ENCODE measurements at regions of chr3 and their contacts with region 1.

Region 1: GRCh38 chr3:58299839-58300516 is 6.1 kb upstream of the RPP14 start:
- DNase-seq: peak in 2 of 4 donors; percentile 14 to 20
- ATAC-seq: peak; percentile 47
- H3K4me3 ChIP-seq: no peak overlapping the region
- H3K27ac ChIP-seq: no peak overlapping the region
- H3K4me1 ChIP-seq: no peaks in the 10 kb centered on the region
- H3K27me3 ChIP-seq: no peaks in the 10 kb centered on the region
- CTCF ChIP-seq: peak; percentile 23 to 71 (median 60)
- POLR2A ChIP-seq: no peak

Region 2: DNA sequence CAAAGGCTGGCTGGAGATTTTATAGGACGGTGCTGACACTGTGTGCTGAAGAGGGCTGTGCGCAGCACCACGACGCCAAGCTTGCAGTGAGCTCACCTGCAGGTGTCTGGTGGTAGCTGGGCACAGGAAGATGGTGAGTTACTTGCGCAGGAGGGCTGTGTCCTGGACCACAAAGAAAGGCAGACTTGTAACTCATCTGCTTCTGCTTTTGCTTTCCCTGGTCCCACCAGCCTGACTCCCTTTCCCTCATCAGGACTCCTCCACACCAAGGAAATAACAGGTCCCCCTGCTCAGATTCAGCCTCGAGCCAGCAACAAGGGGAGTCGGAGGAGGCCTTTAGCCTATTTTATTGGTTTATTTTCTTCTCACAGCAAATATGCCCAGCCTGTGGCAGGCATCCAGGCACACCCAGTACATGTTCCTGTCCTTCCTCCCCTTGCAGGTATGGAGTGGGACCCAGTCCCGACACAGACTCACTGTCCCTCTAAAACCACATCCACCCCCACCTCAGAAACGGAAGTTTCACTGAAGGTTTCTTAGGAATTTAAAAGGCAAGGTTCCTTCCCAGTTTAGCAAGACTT is 327.4 kb before region 1 on chr3:
- intact Hi-C with region 1: no loop called
- DNase-seq: no peak
- ATAC-seq: no peak
- H3K4me3 ChIP-seq: no peak overlapping the region
- H3K27ac ChIP-seq: no peak overlapping the region
- H3K4me1 ChIP-seq: no peaks in the 10 kb centered on the region
- H3K27me3 ChIP-seq: no peaks in the 10 kb centered on the region
- CTCF ChIP-seq: no peak
- POLR2A ChIP-seq: no peak

Region 3: GRCh38 chr3:58008140-58009025 is 291.6 kb before region 1 on chr3 and contains the start of gene FLNB:
- intact Hi-C with region 1: loop called (anchors 5 kb)
- DNase-seq: peak; percentile 72 to 83 (median 80)
- ATAC-seq: peak; percentile 90
- H3K4me3 ChIP-seq: peak within 1 kb of the TSS; percentile 93 to 98
- H3K27ac ChIP-seq: peak within 1 kb of the TSS; percentile 78 to 88 (median 84)
- H3K4me1 ChIP-seq: peaks cover 34% of the 10 kb centered on the region
- H3K27me3 ChIP-seq: no peaks in the 10 kb centered on the region
- CTCF ChIP-seq: peak; percentile 72 to 93 (median 80)
- POLR2A ChIP-seq: peak; percentile 63 to 75 (median 72)
- total RNA-seq, gene FLNB: 104 to 121 TPM

Region 4: DNA sequence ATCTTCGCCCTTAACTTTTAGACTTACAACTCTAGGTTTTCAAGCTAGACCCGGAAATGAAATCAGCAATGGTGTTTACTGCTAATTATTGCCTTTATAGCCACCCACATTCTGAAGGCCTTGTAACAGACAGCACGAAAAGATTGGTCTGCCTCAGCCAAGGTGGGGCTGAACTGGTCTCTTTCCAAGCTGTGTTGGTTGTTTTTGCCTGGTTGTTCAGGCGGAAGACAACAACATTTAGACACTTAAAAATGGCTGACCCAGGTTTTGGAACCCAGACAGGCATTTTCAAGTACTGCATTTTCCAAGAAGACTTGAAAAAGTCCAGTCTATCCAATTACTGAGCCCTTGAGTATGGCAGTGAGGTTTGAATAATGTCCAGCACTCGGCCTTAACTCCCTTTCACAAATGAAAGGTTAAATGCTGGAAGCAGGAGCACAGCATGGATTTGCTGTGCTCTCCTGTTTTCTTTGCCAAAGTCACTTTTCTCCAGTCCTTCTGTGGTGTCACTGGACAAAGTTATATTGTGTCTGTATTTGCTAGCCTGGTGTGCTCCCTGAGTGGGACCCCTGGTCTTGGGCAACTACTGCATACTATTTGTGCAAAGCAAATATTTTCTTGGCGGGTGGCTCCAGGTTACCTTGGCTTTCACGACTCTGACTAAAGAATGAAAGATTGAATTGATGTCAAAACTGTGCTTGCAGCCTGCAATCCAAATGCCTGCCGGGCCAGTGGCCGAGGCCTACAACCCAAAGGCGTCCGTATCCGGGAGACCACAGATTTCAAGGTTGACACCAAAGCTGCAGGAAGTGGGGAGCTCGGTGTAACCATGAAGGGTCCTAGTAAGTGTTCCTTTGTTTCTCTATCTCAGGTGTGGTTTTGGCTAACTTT is 198.2 kb before region 1 on chr3:
- intact Hi-C with region 1: no loop called
- DNase-seq: peak; percentile 59 to 81 (median 72)
- ATAC-seq: peak; percentile 71
- H3K4me3 ChIP-seq: no peak overlapping the region
- H3K27ac ChIP-seq: peak overlapping the region; percentile 75 to 85 (median 82)
- H3K4me1 ChIP-seq: peaks cover 46% of the 10 kb centered on the region
- H3K27me3 ChIP-seq: no peaks in the 10 kb centered on the region
- CTCF ChIP-seq: no peak
- POLR2A ChIP-seq: no peak

Region 5: GRCh38 chr3:58191361-58191991 is 108.5 kb before region 1 on chr3:
- intact Hi-C with region 1: loop called (anchors 5 kb)
- DNase-seq: no peak
- ATAC-seq: no peak
- H3K4me3 ChIP-seq: no peak overlapping the region
- H3K27ac ChIP-seq: no peak overlapping the region
- H3K4me1 ChIP-seq: peaks cover 5% of the 10 kb centered on the region
- H3K27me3 ChIP-seq: no peaks in the 10 kb centered on the region
- CTCF ChIP-seq: no peak
- POLR2A ChIP-seq: no peak

Measured in body of pancreas (tissue), 4 donors.